ENCODE measurements at regions of chr20 and their contacts with region 1.

Region 1: DNA sequence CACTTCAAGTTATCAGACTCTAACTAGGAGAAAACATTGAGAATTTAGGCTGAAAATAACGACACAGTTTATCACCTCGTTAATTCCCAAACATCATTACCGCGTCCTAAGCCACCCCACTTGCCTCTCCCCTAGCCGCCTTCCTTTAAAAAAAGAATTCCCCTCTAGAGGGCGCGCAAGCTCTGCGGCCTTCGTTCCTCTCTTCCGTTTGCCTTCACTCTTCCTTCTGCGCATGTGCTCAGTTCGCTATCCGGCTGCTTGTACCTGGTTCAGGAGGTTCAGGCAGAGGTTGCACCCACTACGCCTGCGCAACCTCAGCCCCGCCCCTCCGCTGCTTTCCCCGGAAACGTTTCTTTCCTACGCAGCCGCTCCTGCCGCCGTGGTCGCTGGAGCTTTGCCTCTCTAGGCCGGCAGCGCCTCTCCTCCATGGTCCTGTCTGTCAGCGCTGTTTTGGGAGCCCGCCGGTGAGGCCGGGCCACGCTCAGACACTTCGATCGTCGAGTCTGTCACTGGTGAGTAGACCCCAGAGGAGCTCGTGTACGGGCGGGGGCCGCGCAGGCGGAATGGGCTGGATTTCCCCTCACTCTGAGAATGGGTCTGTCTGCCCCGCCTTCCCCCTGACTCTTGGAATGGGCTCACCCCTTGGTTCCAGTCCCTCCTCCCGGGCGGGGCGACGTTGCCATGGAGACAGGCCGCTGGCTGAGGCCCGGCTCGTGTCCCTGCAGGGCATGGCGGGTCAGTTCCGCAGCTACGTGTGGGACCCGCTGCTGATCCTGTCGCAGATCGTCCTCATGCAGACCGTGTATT is at the start of gene SYS1:
- DNase-seq: peak; percentile 97 to 99 (median 99)
- ATAC-seq: peak; percentile 90
- H3K4me3 ChIP-seq: peak within 1 kb of the TSS; percentile 92
- H3K4me3 Mint-ChIP-seq: peak within 1 kb of the TSS; percentile 83 to 100 (median 97)
- H3K27ac ChIP-seq: peak within 1 kb of the TSS; percentile 99
- H3K27ac Mint-ChIP-seq: peak within 1 kb of the TSS; percentile 92 to 100 (median 99)
- H3K4me1 ChIP-seq: peaks cover 24 to 30% of the 10 kb centered on the region in 2 donors
- H3K4me1 Mint-ChIP-seq: peaks cover 24 to 56% (median 47%) of the 10 kb centered on the region in 7 donors
- H3K27me3 ChIP-seq: no peaks in the 10 kb centered on the region
- H3K27me3 Mint-ChIP-seq: peaks cover 0 to 2% (median 0%) of the 10 kb centered on the region in 5 donors
- total RNA-seq, gene SYS1: 23.9 to 111 (median 67.1) TPM

Region 2: GRCh38 chr20:44210422-44211176 is 1152.4 kb before region 1 on chr20 and contains the start of gene OSER1:
- CTCF ChIA-PET with region 1: no interaction called
- POLR2A ChIA-PET with region 1: no interaction called
- intact Hi-C with region 1: loop called in 1 of 2 experiments (anchors 1 kb)
- DNase-seq: peak; percentile 98 to 99 (median 99)
- ATAC-seq: peak; percentile 91
- H3K4me3 ChIP-seq: peak within 1 kb of the TSS; percentile 96
- H3K4me3 Mint-ChIP-seq: peak within 1 kb of the TSS; percentile 90 to 100 (median 95)
- H3K27ac ChIP-seq: peak within 1 kb of the TSS; percentile 97
- H3K27ac Mint-ChIP-seq: peak within 1 kb of the TSS; percentile 97 to 99 (median 98)
- H3K4me1 ChIP-seq: peaks cover 23 to 29% of the 10 kb centered on the region in 2 donors
- H3K4me1 Mint-ChIP-seq: peaks cover 45 to 78% (median 72%) of the 10 kb centered on the region in 7 donors
- H3K27me3 ChIP-seq: no peaks in the 10 kb centered on the region
- H3K27me3 Mint-ChIP-seq: peaks cover 0 to 4% (median 0%) of the 10 kb centered on the region in 5 donors
- total RNA-seq, gene OSER1: 25.0 to 115 (median 43.0) TPM

Region 3: GRCh38 chr20:45246109-45246508 is 116.9 kb before region 1 on chr20:
- CTCF ChIA-PET with region 1: no interaction called
- POLR2A ChIA-PET with region 1: no interaction called
- intact Hi-C with region 1: no loop called
- DNase-seq: no peak
- ATAC-seq: no peak
- H3K4me3 ChIP-seq: no peak overlapping the region
- H3K4me3 Mint-ChIP-seq: no peak overlapping the region
- H3K27ac ChIP-seq: no peak overlapping the region
- H3K27ac Mint-ChIP-seq: no peak overlapping the region
- H3K4me1 ChIP-seq: no peaks in the 10 kb centered on the region
- H3K4me1 Mint-ChIP-seq: no peaks in the 10 kb centered on the region
- H3K27me3 ChIP-seq: peaks cover 0 to 4% of the 10 kb centered on the region in 2 donors
- H3K27me3 Mint-ChIP-seq: peaks cover 46 to 86% (median 60%) of the 10 kb centered on the region in 5 donors

Region 4: GRCh38 chr20:45373353-45374100 is 10.5 kb after region 1 on chr20:
- CTCF ChIA-PET with region 1: interaction called, 24 read pairs
- POLR2A ChIA-PET with region 1: interaction called, 96 read pairs
- intact Hi-C with region 1: loop called (anchors 1 kb)
- DNase-seq: peak; percentile 81 to 90 (median 89)
- ATAC-seq: peak; percentile 94
- H3K4me3 ChIP-seq: peak overlapping the region; percentile 74
- H3K4me3 Mint-ChIP-seq: peak overlapping the region; percentile 84 to 94 (median 90)
- H3K27ac ChIP-seq: peak overlapping the region; percentile 77
- H3K27ac Mint-ChIP-seq: peak overlapping the region; percentile 87 to 97 (median 96)
- H3K4me1 ChIP-seq: peaks cover 13 to 29% of the 10 kb centered on the region in 2 donors
- H3K4me1 Mint-ChIP-seq: peaks cover 18 to 48% (median 46%) of the 10 kb centered on the region in 7 donors
- H3K27me3 ChIP-seq: no peaks in the 10 kb centered on the region
- H3K27me3 Mint-ChIP-seq: no peaks in the 10 kb centered on the region

Region 5: GRCh38 chr20:45436732-45437391 is 73.9 kb after region 1 on chr20:
- CTCF ChIA-PET with region 1: interaction called, 146 read pairs
- POLR2A ChIA-PET with region 1: interaction called, 55 read pairs
- intact Hi-C with region 1: loop called (anchors 1 kb)
- DNase-seq: peak; percentile 70 to 89 (median 80)
- ATAC-seq: peak; percentile 100
- H3K4me3 ChIP-seq: peak overlapping the region; percentile 65
- H3K4me3 Mint-ChIP-seq: peak overlapping the region; percentile 71 to 86 (median 81)
- H3K27ac ChIP-seq: peak overlapping the region; percentile 50
- H3K27ac Mint-ChIP-seq: peak overlapping the region in 6 of 9 donors; percentile 31 to 84 (median 64)
- H3K4me1 ChIP-seq: peaks cover 5 to 11% of the 10 kb centered on the region in 2 donors
- H3K4me1 Mint-ChIP-seq: peaks cover 0 to 24% (median 14%) of the 10 kb centered on the region in 7 donors
- H3K27me3 ChIP-seq: no peaks in the 10 kb centered on the region
- H3K27me3 Mint-ChIP-seq: no peaks in the 10 kb centered on the region

Region 6: GRCh38 chr20:45647441-45648050 is 284.5 kb after region 1 on chr20:
- CTCF ChIA-PET with region 1: no interaction called
- POLR2A ChIA-PET with region 1: no interaction called
- intact Hi-C with region 1: no loop called
- DNase-seq: no peak
- ATAC-seq: peak; percentile 10
- H3K4me3 ChIP-seq: no peak overlapping the region
- H3K4me3 Mint-ChIP-seq: no peak overlapping the region
- H3K27ac ChIP-seq: no peak overlapping the region
- H3K27ac Mint-ChIP-seq: no peak overlapping the region
- H3K4me1 ChIP-seq: no peaks in the 10 kb centered on the region
- H3K4me1 Mint-ChIP-seq: no peaks in the 10 kb centered on the region
- H3K27me3 ChIP-seq: no peaks in the 10 kb centered on the region
- H3K27me3 Mint-ChIP-seq: peaks cover 2 to 30% (median 19%) of the 10 kb centered on the region in 5 donors

Region 7: GRCh38 chr20:45672765-45673164 is 309.8 kb after region 1 on chr20:
- CTCF ChIA-PET with region 1: no interaction called
- POLR2A ChIA-PET with region 1: no interaction called
- intact Hi-C with region 1: no loop called
- DNase-seq: no peak
- ATAC-seq: no peak
- H3K4me3 ChIP-seq: no peak overlapping the region
- H3K4me3 Mint-ChIP-seq: no peak overlapping the region
- H3K27ac ChIP-seq: no peak overlapping the region
- H3K27ac Mint-ChIP-seq: no peak overlapping the region
- H3K4me1 ChIP-seq: no peaks in the 10 kb centered on the region
- H3K4me1 Mint-ChIP-seq: no peaks in the 10 kb centered on the region
- H3K27me3 ChIP-seq: no peaks in the 10 kb centered on the region
- H3K27me3 Mint-ChIP-seq: peaks cover 23 to 52% (median 32%) of the 10 kb centered on the region in 5 donors

Region 8: GRCh38 chr20:45771182-45771759 is 408.3 kb after region 1 on chr20:
- CTCF ChIA-PET with region 1: interaction called, 15 read pairs
- POLR2A ChIA-PET with region 1: interaction called, 12 read pairs
- intact Hi-C with region 1: loop called (anchors 1 to 2 kb)
- DNase-seq: peak; percentile 59 to 84 (median 74)
- ATAC-seq: peak; percentile 95
- H3K4me3 ChIP-seq: no peak overlapping the region
- H3K4me3 Mint-ChIP-seq: no peak overlapping the region
- H3K27ac ChIP-seq: no peak overlapping the region
- H3K27ac Mint-ChIP-seq: peak overlapping the region in 3 of 9 donors; percentile 4 to 40 (median 5)
- H3K4me1 ChIP-seq: no peaks in the 10 kb centered on the region
- H3K4me1 Mint-ChIP-seq: peaks cover 0 to 5% (median 4%) of the 10 kb centered on the region in 7 donors
- H3K27me3 ChIP-seq: no peaks in the 10 kb centered on the region
- H3K27me3 Mint-ChIP-seq: peaks cover 0 to 14% (median 8%) of the 10 kb centered on the region in 5 donors

Region 9: GRCh38 chr20:46089417-46090388 is 726.7 kb after region 1 on chr20 and contains the start of gene NCOA5:
- CTCF ChIA-PET with region 1: no interaction called
- POLR2A ChIA-PET with region 1: no interaction called
- intact Hi-C with region 1: loop called in 1 of 2 experiments (anchors 2 kb)
- DNase-seq: peak; percentile 90 to 95 (median 94)
- ATAC-seq: peak; percentile 98
- H3K4me3 ChIP-seq: peak within 1 kb of the TSS; percentile 73
- H3K4me3 Mint-ChIP-seq: peak within 1 kb of the TSS; percentile 86 to 95 (median 90)
- H3K27ac ChIP-seq: peak within 1 kb of the TSS; percentile 89
- H3K27ac Mint-ChIP-seq: peak within 1 kb of the TSS; percentile 86 to 95 (median 90)
- H3K4me1 ChIP-seq: peaks cover 24 to 36% of the 10 kb centered on the region in 2 donors
- H3K4me1 Mint-ChIP-seq: peaks cover 29 to 53% (median 51%) of the 10 kb centered on the region in 7 donors
- H3K27me3 ChIP-seq: no peaks in the 10 kb centered on the region
- H3K27me3 Mint-ChIP-seq: no peaks in the 10 kb centered on the region
- total RNA-seq, gene NCOA5: 15.7 to 43.8 (median 39.4) TPM

Measured in naive thymus-derived CD4-positive, alpha-beta T cell (primary cell).